ENCODE measurements at regions of chr3 and their contacts with region 1.

Region 1: DNA sequence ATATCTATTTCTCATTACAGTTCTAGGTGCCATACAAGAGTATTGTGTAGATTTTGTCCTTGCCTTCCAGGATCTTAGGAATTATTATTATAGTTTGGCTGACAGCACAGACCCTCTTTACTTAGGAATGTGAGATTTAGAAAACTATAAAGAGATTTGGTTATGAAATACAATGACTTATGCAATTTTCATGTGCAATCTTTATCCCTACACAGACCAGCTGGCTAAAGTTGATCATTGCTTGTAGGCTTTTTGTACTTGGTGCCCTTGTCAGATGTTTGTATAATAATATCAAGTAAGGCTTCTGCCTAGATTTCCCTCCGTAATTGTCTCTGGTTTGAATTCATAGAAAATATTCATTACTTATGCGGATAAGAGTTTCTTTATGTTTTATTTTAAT is 174.5 kb upstream of the GAP43 start:
- DNase-seq: no peak
- H3K4me3 ChIP-seq: no peak overlapping the region
- H3K27ac ChIP-seq: no peak overlapping the region
- H3K4me1 ChIP-seq: peaks cover 4% of the 10 kb centered on the region
- H3K27me3 ChIP-seq: no peaks in the 10 kb centered on the region
- CTCF ChIP-seq: no peak
- POLR2A ChIP-seq: no peak

Region 2: DNA sequence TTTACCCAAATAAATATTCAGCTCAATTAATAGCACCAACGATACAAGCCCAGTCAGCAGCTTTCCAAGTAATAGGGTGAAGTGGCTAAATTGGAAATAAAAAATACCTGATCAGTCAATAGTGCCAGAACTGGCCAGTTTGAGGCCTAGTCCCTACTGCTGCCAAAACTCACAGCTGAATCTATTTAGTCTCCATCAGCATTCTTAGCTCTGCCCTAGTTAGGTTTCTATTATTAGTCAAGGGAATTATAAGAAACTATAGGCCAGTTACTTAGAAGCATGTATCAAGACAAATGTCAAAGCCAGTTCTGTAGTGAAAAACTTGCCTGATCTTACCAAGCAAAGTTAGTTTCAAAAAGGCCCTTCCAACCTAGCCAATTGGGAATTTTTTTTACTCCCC is 155.5 kb before region 1 on chr3:
- CTCF ChIA-PET with region 1: no interaction called
- POLR2A ChIA-PET with region 1: no interaction called
- dilution Hi-C with region 1: no loop called
- intact Hi-C with region 1: no loop called
- DNase-seq: no peak
- H3K4me3 ChIP-seq: no peak overlapping the region
- H3K27ac ChIP-seq: no peak overlapping the region
- H3K4me1 ChIP-seq: no peaks in the 10 kb centered on the region
- H3K27me3 ChIP-seq: no peaks in the 10 kb centered on the region
- CTCF ChIP-seq: no peak
- POLR2A ChIP-seq: no peak

Region 3: GRCh38 chr3:115380883-115381572 is 67.8 kb before region 1 on chr3:
- CTCF ChIA-PET with region 1: no interaction called
- POLR2A ChIA-PET with region 1: no interaction called
- dilution Hi-C with region 1: no loop called
- intact Hi-C with region 1: no loop called
- DNase-seq: no peak
- H3K4me3 ChIP-seq: no peak overlapping the region
- H3K27ac ChIP-seq: peak overlapping the region; percentile 60
- H3K4me1 ChIP-seq: peaks cover 24% of the 10 kb centered on the region
- H3K27me3 ChIP-seq: no peaks in the 10 kb centered on the region
- CTCF ChIP-seq: no peak
- POLR2A ChIP-seq: no peak

Region 4: DNA sequence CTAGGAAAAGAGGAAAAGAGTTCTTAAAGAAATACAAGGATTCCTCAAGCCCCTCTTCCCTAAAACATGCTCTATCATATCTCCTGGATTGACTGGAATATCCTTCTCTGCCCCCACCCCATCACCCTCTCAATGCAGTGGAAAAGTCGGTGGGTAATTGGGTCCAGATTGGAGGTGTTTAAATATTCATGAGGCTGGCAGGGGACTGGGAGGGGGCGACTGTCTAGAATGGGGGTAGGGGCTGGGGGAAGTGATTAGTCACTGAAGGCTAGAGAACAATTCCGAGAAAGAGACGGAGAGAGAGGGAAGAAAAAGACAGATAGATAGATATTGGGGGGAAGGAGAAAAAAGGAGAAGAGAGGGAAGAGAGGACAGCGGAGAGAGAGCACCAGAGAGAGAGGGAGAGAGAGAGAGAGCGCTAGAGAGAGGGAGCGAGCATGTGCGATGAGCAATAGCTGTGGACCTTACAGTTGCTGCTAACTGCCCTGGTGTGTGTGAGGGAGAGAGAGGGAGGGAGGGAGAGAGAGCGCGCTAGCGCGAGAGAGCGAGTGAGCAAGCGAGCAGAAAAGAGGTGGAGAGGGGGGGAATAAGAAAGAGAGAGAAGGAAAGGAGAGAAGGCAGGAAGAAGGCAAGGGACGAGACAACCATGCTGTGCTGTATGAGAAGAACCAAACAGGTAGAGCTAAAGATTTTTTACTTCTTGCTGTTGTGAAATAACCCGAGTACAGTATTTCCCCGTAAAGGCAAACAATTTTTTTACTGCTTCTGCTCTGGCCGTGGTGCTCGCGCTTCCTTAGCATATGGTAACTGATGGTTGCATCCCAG is 174.4 kb after region 1 on chr3 and contains the start of gene GAP43:
- CTCF ChIA-PET with region 1: no interaction called
- POLR2A ChIA-PET with region 1: no interaction called
- dilution Hi-C with region 1: no loop called
- intact Hi-C with region 1: loop called (anchors 5 kb)
- DNase-seq: peak; percentile 23
- H3K4me3 ChIP-seq: peak within 1 kb of the TSS in 1 of 3 experiments; percentile 23
- H3K27ac ChIP-seq: no peak within 1 kb of the TSS
- H3K4me1 ChIP-seq: no peaks in the 10 kb centered on the region
- H3K27me3 ChIP-seq: peaks cover 18% of the 10 kb centered on the region in 2 experiments
- CTCF ChIP-seq: no peak
- POLR2A ChIP-seq: no peak
- total RNA-seq, gene GAP43: not detected in 2 replicates

Measured in endothelial cell of umbilical vein (primary cell).